ENCODE measurements at regions of chr16 and their contacts with region 1.

Region 1: GRCh38 chr16:48231727-48232492 is 12.2 kb upstream of the LONP2 start:
- DNase-seq: peak; percentile 53
- ATAC-seq: peak; percentile 95
- H3K4me3 Mint-ChIP-seq: no peak overlapping the region
- H3K27ac Mint-ChIP-seq: no peak overlapping the region
- H3K4me1 Mint-ChIP-seq: peaks cover 13% of the 10 kb centered on the region
- H3K27me3 Mint-ChIP-seq: no peaks in the 10 kb centered on the region
- CTCF ChIP-seq: no peak

Region 2: DNA sequence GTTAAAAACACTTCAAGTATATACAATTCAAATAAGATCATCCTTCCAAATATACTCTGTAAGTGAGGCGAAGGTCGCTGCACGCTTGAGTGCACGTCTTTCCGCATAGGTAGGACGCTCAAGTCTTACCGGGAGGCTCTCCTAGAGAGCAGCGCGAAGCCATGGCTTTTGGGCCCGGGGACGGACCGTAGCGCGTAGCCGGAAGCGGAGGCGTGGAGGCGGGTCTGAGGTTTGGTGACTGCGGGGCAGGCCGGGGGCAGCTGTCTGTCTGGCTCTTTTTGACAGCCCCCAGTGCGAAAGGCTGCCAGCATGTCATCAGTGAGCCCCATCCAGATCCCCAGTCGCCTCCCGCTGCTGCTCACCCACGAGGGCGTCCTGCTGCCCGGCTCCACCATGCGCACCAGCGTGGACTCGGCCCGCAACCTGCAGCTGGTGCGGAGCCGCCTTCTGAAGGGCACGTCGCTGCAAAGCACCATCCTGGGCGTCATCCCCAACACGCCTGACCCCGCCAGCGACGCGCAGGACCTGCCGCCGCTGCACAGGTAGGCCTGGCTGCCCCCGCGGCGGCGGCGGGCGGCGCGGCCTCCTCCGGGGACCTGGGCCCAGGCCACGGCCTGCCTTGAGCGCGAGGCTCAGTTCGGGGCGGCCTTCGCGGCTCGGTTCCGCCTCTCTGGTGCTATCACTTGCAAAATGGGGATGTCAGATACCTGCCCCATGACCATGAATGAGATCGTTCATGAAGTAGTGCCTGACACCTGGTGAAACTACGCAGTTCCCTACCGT is 12.4 kb after region 1 on chr16 and contains the start of gene LONP2:
- CTCF ChIA-PET with region 1: interaction called, 10 read pairs
- POLR2A ChIA-PET with region 1: no interaction called
- DNase-seq: peak; percentile 88
- ATAC-seq: peak; percentile 99
- H3K4me3 Mint-ChIP-seq: peak within 1 kb of the TSS; percentile 87
- H3K27ac Mint-ChIP-seq: peak within 1 kb of the TSS; percentile 53
- H3K4me1 Mint-ChIP-seq: peaks cover 12% of the 10 kb centered on the region
- H3K27me3 Mint-ChIP-seq: no peaks in the 10 kb centered on the region; the same call in 1 of the 2 replicates
- CTCF ChIP-seq: no peak
- total RNA-seq, gene LONP2: 28.4 to 32.4 TPM (median 30.9 TPM) in 3 replicates

Measured in WTC11 (cell line).